CD14-positive monocyte (primary cell): ENCODE measurements at regions of chr11 and their contacts with region 1.

Region 1: DNA sequence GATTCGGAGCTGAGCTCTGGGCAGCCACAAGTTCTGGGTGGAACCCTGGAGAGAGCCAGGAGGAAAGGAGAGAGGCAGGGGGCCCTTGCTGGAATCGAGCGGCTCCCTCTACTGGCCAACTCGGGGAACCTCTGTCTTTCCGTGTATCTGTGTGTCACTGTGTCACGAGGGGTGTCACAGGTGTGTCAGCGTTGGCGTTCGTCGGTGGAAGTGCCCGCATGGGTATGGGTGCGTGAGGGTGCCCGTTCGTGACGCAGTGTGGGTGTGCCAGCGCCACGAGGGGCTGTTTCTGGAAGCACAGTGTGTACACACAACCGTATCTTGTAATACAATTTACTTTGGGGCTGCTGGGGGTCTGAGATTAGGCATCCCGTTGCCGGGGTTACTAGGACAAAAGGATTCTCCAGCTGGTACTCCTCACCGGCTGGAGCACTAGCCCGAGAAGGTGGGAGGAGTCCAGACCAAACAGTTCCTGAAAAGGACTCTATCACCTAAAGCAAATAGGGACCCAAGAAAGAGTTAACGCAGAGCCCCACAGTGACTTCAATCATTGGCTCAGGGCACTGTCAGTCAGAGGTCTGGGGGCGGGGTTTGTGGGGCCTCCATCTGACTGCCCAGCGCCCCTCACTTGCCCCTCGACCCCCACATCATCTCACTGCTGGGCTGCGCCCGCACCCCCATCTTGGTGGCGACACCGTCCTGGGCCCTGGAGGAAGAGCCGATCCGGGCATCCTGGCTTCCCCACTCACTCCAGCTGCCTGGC is 2.6 kb upstream of the BCL9L start:
- DNase-seq: peak; percentile 85 to 97 (median 85)
- H3K4me3 ChIP-seq: peak overlapping the region; percentile 78 to 91 (median 84)
- H3K4me3 Mint-ChIP-seq: peak overlapping the region; percentile 92 to 98
- H3K27ac ChIP-seq: peak overlapping the region; percentile 86 to 87
- H3K27ac Mint-ChIP-seq: peak overlapping the region; percentile 92 to 98 (median 96)
- H3K4me1 ChIP-seq: peaks cover 55 to 69% of the 10 kb centered on the region in 2 donors
- H3K4me1 Mint-ChIP-seq: peaks cover 50% of the 10 kb centered on the region
- H3K27me3 ChIP-seq: no peaks in the 10 kb centered on the region
- H3K27me3 Mint-ChIP-seq: peaks cover 0 to 15% (median 3%) of the 10 kb centered on the region in 3 donors
- CTCF ChIP-seq: peak; percentile 93

Region 2: GRCh38 chr11:118791111-118791965 is 137.0 kb before region 1 on chr11 and contains the start of gene DDX6:
- intact Hi-C with region 1: loop called in 1 of 2 experiments (anchors 5 kb)
- DNase-seq: peak; percentile 84 to 89 (median 86)
- H3K4me3 ChIP-seq: peak within 1 kb of the TSS; percentile 89 to 99 (median 96)
- H3K4me3 Mint-ChIP-seq: peak within 1 kb of the TSS; percentile 97 to 99
- H3K27ac ChIP-seq: peak within 1 kb of the TSS; percentile 98 to 99
- H3K27ac Mint-ChIP-seq: peak within 1 kb of the TSS; percentile 99
- H3K4me1 ChIP-seq: peaks cover 21 to 46% of the 10 kb centered on the region in 2 donors
- H3K4me1 Mint-ChIP-seq: peaks cover 34% of the 10 kb centered on the region
- H3K27me3 ChIP-seq: no peaks in the 10 kb centered on the region
- H3K27me3 Mint-ChIP-seq: peaks cover 0 to 4% (median 4%) of the 10 kb centered on the region in 3 donors
- CTCF ChIP-seq: no peak
- polyA plus RNA-seq, gene DDX6: 17.8 to 31.9 (median 28.0) TPM

Region 3: DNA sequence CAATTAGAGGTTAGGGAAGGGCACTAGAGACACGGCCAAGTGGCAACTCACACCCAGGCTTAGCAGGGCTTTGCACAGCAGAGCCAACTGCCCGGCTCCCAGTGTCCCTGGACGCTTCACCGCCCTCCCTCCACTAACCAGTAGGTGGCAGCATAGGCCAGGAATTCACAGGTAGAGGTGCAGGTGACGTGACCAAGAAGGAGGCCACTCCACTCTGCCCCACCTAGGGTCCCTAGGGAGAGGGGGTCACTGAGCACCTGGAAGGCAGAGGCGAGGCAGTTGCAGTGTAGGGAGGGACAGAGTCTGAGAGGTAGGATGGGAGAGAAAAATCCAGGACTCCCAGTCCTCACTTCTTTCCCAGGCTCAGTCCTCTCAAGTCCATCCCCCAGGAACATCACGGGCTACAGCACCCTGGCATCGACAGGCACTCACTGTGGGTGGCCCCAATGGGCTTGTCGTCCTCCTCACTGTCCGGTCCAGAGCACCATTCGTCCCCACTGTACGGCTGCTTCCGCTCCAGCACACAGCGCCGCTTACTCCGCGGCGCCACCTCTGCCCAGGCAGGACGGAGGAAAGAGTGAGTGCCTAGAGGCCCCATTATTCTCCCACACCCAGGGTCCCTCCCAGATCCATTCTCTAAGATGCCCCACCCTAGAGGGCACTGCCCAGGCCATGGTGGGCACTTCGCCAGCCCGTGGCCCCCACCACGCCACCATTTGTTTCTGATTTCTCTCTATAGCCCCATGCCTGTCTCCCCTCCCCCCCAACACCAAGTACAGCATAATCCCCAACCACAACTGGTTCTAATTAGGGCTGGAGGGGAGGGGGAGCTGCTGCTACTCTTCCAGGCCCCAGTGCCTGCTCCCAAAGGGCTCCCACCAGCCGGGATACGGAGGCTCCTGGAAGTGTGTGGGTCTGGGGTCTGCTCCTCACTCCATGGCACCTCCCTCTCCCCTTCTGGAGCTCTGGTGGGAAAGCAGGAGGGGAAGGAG is 20.9 kb before region 1 on chr11:
- intact Hi-C with region 1: loop called (anchors 2 kb)
- DNase-seq: peak; percentile 72 to 81 (median 76)
- H3K4me3 ChIP-seq: no peak overlapping the region
- H3K4me3 Mint-ChIP-seq: no peak overlapping the region
- H3K27ac ChIP-seq: no peak overlapping the region
- H3K27ac Mint-ChIP-seq: peak overlapping the region in 3 of 7 donors; percentile 10 to 60 (median 53)
- H3K4me1 ChIP-seq: peaks cover 21 to 24% of the 10 kb centered on the region in 2 donors
- H3K4me1 Mint-ChIP-seq: peaks cover 21% of the 10 kb centered on the region
- H3K27me3 ChIP-seq: no peaks in the 10 kb centered on the region
- H3K27me3 Mint-ChIP-seq: peaks cover 7 to 25% (median 14%) of the 10 kb centered on the region in 3 donors
- CTCF ChIP-seq: peak; percentile 93

Region 4: GRCh38 chr11:119018074-119018938 is 90.0 kb after region 1 on chr11 and contains the starts of genes RPS25 and TRAPPC4:
- intact Hi-C with region 1: loop called in 1 of 2 experiments (anchors 5 kb)
- DNase-seq: peak; percentile 96 to 97 (median 96)
- H3K4me3 ChIP-seq: peak within 1 kb of the TSS; percentile 87 to 88 (median 88)
- H3K4me3 Mint-ChIP-seq: peak within 1 kb of the TSS; percentile 96 to 97
- H3K27ac ChIP-seq: peak within 1 kb of the TSS; percentile 93 to 96
- H3K27ac Mint-ChIP-seq: peak within 1 kb of the TSS; percentile 98 to 100 (median 99)
- H3K4me1 ChIP-seq: peaks cover 26 to 34% of the 10 kb centered on the region in 2 donors
- H3K4me1 Mint-ChIP-seq: peaks cover 24% of the 10 kb centered on the region
- H3K27me3 ChIP-seq: no peaks in the 10 kb centered on the region
- H3K27me3 Mint-ChIP-seq: peaks cover 0 to 1% (median 0%) of the 10 kb centered on the region in 3 donors
- CTCF ChIP-seq: no peak
- polyA plus RNA-seq, gene RPS25: 1,137 to 1,336 (median 1,264) TPM
- polyA plus RNA-seq, gene TRAPPC4: 46.9 to 54.5 (median 50.0) TPM